ENCODE measurements at regions of chr3 and their contacts with region 1.

Region 1: DNA sequence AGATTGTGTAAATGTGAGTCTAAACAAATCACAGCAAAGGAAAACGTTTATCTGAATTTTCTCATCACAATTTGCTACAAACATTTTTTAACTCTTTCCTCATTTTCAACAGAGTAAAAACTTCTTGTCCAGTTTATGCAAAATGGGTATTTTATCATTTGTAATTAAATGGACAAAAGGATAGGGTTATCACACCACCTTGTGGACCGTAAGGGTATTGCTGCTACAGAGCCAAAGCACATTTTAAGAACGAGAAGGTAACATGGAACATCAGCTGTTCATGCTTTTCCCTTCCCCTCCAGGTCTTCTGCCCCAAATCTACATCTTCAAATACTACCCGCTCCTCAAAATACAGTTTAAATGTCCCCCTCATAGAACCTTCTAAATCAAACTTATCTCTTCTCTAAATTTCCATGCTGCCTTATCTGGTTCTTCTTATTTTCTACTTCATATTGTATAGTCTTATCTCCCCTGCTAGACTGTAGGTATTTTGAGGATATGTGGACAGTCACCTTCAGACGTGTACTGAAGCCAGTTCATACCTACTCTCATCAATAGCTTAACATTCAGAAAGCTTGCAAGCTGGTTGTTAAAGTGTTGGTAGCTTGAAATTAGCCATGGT is 12.8 kb upstream of the SETMAR start:
- DNase-seq: peak in 5 of 7 donors; percentile 32 to 70 (median 51)
- H3K4me3 ChIP-seq: no peak overlapping the region
- H3K27ac ChIP-seq: no peak overlapping the region
- H3K4me1 ChIP-seq: no peaks in the 10 kb centered on the region
- H3K27me3 ChIP-seq: no peaks in the 10 kb centered on the region
- CTCF ChIP-seq: peak; percentile 79 to 95 (median 90)
- POLR2A ChIP-seq: no peak

Region 2: DNA sequence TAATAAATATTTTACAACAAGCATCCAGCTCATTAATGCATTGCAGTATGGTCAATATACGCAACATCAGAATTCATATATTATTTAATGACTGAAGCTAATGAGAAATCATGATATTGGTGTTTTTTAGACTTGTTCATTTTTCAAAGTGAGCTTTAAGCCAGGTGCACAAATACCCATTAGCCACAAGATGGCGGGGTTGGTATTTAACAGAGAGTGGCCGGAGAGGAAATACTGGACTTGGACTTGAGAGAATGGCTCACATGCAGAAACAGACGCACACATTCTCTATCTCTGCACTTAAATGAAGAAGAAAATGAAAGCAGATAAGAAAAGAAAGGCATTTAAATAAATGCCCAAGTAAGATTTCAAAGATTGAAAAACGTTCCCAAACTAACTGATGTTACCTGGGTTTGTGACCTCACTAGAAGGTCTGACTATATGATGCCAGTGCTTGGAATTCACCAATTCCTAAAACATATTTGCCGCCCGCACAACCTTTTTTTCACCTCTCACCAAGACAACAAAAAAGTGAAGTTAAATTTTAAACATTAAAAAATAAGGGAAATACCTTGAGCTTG is 1089.7 kb before region 1 on chr3:
- intact Hi-C with region 1: loop called in 1 of 2 experiments (anchors 5 kb)
- DNase-seq: peak; percentile 46 to 77 (median 60)
- H3K4me3 ChIP-seq: no peak overlapping the region
- H3K27ac ChIP-seq: no peak overlapping the region
- H3K4me1 ChIP-seq: no peaks in the 10 kb centered on the region
- H3K27me3 ChIP-seq: no peaks in the 10 kb centered on the region
- CTCF ChIP-seq: peak; percentile 68 to 82 (median 76)
- POLR2A ChIP-seq: no peak

Region 3: GRCh38 chr3:4376499-4376898 is 86.1 kb after region 1 on chr3:
- intact Hi-C with region 1: no loop called
- DNase-seq: no peak
- H3K4me3 ChIP-seq: no peak overlapping the region
- H3K27ac ChIP-seq: no peak overlapping the region
- H3K4me1 ChIP-seq: no peaks in the 10 kb centered on the region
- H3K27me3 ChIP-seq: no peaks in the 10 kb centered on the region
- CTCF ChIP-seq: no peak
- POLR2A ChIP-seq: no peak